Transverse colon (tissue), 4 donors: ENCODE measurements at regions of chr16 and their contacts with region 1.

Region 1: DNA sequence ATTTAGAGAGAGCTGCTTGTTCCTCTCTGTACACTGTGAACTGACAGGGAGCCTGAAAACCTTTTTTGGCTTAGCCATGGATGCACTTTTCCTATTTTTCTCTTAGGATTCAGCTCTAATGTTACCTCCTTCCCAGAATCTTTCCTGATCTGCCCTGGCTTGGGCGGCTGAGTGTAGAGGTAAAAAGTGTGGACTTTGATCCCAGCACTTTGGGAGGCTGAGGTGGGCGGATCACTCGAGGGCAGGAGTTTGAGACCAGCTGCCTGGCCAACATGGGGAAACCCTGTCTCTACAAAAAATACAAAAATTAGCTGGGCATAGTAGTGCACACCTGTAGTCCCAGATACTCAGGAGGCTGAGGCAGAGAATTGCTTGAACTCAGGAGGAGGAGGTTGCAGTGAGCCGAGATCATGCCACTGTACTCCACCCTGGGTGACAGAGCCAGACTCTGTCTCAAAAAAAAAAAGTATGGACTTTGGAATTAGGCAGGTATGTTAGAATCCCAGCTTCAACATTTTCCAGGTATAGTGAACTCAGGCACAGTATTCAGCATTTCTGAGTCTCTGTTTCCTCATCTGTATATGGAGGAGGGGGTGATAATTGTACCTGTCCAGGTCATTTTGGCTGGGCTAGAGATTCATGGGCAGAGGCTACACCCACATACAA is 212.5 kb upstream of the EEF2KMT start:
- DNase-seq: peak; percentile 57
- H3K4me3 ChIP-seq: no peak overlapping the region
- H3K27ac ChIP-seq: peak overlapping the region; percentile 40 to 58 (median 54)
- H3K4me1 ChIP-seq: peaks cover 0 to 11% (median 6%) of the 10 kb centered on the region in 4 donors
- H3K27me3 ChIP-seq: no peaks in the 10 kb centered on the region
- CTCF ChIP-seq: no peak
- EP300 ChIP-seq: no peak
- POLR2A ChIP-seq: no peak

Region 2: DNA sequence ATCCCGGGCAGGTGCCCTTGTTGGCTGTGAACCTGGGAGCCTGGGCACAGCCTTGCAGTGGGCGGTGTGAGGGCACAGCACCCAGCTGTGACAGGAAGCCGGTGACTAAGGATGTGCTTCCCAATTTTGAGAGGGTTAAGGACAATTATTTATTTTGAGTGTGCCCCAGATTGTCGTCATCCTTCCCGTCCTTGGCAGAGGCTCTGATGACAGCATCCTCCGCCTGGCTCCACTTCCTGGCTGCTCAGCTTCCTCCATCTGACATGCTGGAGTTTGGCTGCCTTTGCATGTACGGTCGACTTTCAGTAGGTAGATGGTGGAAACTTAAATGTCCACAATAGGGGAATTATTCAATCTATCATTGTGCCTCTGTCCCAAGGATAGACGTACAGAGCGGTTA is 69.9 kb after region 1 on chr16:
- in situ Hi-C with region 1: loop called in 1 of 4 experiments (anchors 10 kb)
- intact Hi-C with region 1: no loop called
- DNase-seq: no peak
- H3K4me3 ChIP-seq: no peak overlapping the region
- H3K27ac ChIP-seq: no peak overlapping the region
- H3K4me1 ChIP-seq: no peaks in the 10 kb centered on the region
- H3K27me3 ChIP-seq: no peaks in the 10 kb centered on the region
- CTCF ChIP-seq: no peak
- EP300 ChIP-seq: no peak
- POLR2A ChIP-seq: no peak